A673 (cell line): ENCODE measurements at regions of chr9 and their contacts with region 1.

Region 1: GRCh38 chr9:36154331-36154952 is 14.7 kb upstream of the CCIN start:
- DNase-seq: peak; percentile 54
- H3K4me3 ChIP-seq: no peak overlapping the region
- H3K27ac ChIP-seq: peak overlapping the region; percentile 8
- H3K4me1 ChIP-seq: peaks cover 6% of the 10 kb centered on the region
- H3K27me3 ChIP-seq: no peaks in the 10 kb centered on the region
- CTCF ChIP-seq: no peak

Region 2: DNA sequence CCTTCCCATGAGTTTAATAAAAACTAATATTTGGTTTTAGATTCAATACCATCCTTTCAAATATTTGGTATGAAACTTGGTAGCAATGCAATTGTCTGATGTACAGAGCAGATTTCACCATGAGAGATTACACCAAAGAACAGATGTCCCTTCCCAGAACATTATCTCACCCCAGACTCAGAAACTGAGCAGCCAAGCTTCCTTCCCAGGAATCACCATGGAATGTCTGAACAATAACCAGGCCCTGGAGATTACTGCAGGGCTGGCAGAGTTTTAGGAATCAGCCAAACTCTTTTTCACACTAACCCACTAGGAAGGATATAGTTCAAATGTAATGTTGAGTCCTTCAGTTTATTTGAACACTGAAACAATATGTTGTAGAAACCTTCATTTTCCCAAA is 60.1 kb after region 1 on chr9:
- CTCF ChIA-PET with region 1: no interaction called
- POLR2A ChIA-PET with region 1: no interaction called
- intact Hi-C with region 1: no loop called
- DNase-seq: no peak
- H3K4me3 ChIP-seq: no peak overlapping the region
- H3K27ac ChIP-seq: no peak overlapping the region
- H3K4me1 ChIP-seq: no peaks in the 10 kb centered on the region
- H3K27me3 ChIP-seq: no peaks in the 10 kb centered on the region
- CTCF ChIP-seq: no peak

Region 3: GRCh38 chr9:36461323-36461722 is 306.9 kb after region 1 on chr9:
- CTCF ChIA-PET with region 1: no interaction called
- POLR2A ChIA-PET with region 1: no interaction called
- intact Hi-C with region 1: no loop called
- DNase-seq: no peak
- H3K4me3 ChIP-seq: no peak overlapping the region
- H3K27ac ChIP-seq: no peak overlapping the region
- H3K4me1 ChIP-seq: peaks cover 7% of the 10 kb centered on the region
- H3K27me3 ChIP-seq: no peaks in the 10 kb centered on the region
- CTCF ChIP-seq: no peak

Region 4: DNA sequence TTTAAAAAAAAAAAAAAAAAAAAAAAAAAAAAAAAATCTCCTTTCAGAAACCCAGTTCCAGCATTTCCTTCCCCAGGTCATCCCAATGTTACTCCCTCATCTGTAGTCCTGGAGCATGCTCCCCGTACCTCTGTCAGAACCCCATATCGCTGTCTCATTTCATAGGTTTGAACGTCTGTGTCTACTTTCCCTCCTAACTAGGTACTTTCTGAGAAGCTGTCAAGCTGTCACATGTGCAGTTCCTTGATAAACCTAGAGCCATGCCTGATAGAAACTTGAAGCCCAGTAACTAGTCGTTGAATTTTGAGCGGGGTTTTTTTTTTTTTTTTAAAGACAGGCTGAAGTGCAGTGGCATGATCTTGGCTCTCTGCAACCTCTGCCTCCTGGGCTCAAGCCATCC is 1614.9 kb after region 1 on chr9:
- CTCF ChIA-PET with region 1: no interaction called
- POLR2A ChIA-PET with region 1: interaction called, 11 read pairs
- intact Hi-C with region 1: no loop called
- DNase-seq: no peak
- H3K4me3 ChIP-seq: no peak overlapping the region
- H3K27ac ChIP-seq: no peak overlapping the region
- H3K4me1 ChIP-seq: no peaks in the 10 kb centered on the region
- H3K27me3 ChIP-seq: no peaks in the 10 kb centered on the region
- CTCF ChIP-seq: no peak